ENCODE measurements at regions of chr5 and their contacts with region 1.

Region 1: DNA sequence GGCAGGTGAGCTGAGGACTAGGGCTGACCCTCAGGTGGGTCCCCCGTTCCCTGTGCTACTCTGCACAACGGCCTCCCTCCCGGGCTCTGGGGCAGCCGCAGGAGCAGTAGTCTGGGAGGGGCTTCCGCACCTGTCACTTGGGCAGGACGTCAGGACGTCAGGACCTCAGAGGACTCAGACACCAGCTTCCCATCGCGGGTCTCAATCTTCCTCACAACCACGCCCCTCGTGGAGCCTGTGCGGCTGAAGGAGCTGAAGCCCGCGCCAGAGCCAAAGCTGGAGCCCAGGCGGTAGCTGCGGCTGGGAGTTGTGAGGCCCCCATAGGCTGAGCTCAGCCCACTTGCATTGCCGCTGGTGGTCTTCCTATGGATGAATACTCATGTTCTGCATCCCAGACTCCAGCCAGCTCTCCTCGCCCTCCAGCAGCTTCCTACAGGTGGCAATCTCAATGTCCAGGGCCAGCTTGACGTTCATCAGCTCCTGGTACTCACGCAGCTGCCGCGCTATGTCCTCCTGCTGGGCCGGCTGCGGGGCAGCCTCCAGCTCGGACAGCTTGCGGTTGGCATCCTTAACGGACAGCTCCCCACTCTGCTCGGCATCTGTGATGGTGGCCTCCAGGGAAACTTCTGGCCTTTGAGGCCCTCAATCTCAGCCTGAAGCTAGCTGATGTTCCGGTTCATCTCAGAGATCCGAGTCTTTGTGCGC is 381.4 kb upstream of the RGMB start:
- DNase-seq: no peak
- H3K4me3 ChIP-seq: no peak overlapping the region
- H3K4me3 Mint-ChIP-seq: no peak overlapping the region
- H3K27ac ChIP-seq: no peak overlapping the region
- H3K27ac Mint-ChIP-seq: no peak overlapping the region
- H3K4me1 ChIP-seq: no peaks in the 10 kb centered on the region
- H3K4me1 Mint-ChIP-seq: no peaks in the 10 kb centered on the region
- H3K27me3 ChIP-seq: no peaks in the 10 kb centered on the region
- H3K27me3 Mint-ChIP-seq: peaks cover 0 to 2% of the 10 kb centered on the region in 2 donors

Region 2: GRCh38 chr5:98296426-98296825 is 95.6 kb before region 1 on chr5:
- CTCF ChIA-PET with region 1: no interaction called
- POLR2A ChIA-PET with region 1: interaction called, 10 read pairs
- DNase-seq: no peak
- H3K4me3 ChIP-seq: no peak overlapping the region
- H3K4me3 Mint-ChIP-seq: no peak overlapping the region
- H3K27ac ChIP-seq: no peak overlapping the region
- H3K27ac Mint-ChIP-seq: no peak overlapping the region
- H3K4me1 ChIP-seq: no peaks in the 10 kb centered on the region
- H3K4me1 Mint-ChIP-seq: no peaks in the 10 kb centered on the region
- H3K27me3 ChIP-seq: no peaks in the 10 kb centered on the region
- H3K27me3 Mint-ChIP-seq: no peaks in the 10 kb centered on the region